HEK293T (cell line): ENCODE measurements at regions of chr6 and their contacts with region 1.

Region 1: GRCh38 chr6:133568970-133569889 is 319.7 kb upstream of the TCF21 start:
- DNase-seq: peak; percentile 69

Region 2: DNA sequence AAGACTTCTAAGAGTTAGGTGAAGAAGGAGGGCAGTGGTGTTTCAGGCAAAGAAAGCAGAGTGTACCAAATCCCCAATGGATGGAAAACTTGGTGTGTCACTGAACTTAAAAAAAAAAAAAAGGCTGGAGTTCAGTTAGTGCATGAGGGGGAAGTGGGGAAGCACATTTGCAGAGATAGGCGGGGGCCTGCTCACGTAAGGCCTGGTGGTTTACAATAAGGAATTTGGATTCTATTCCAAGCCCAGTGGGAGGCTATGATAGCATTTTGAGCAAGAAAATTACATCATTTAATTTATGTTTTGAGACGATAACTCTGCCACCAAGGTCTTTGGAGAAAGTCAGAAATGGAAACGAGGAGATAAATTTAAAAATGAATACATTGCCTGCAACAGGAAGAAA is 102.6 kb before region 1 on chr6:
- CTCF ChIA-PET with region 1: no interaction called
- POLR2A ChIA-PET with region 1: no interaction called
- DNase-seq: no peak

Region 3: DNA sequence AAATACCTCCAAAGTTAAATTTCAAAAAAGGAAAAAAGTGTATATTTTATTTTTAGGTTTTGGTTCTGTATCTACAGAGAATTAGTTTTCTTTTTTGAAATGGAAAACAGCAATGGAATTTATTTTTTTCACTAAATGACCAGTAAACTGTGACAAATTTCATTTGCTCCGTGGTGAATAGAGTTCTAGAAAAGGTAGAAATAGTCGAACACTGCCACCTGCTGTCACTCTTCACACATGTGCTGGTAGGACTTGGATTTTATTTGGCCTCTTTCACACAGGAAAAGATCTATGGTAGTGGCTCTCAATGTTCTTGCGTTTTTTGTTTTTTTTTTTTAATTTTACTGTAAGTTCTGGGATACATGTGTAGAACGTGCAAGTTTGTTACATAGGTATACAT is 15.6 kb before region 1 on chr6:
- CTCF ChIA-PET with region 1: no interaction called
- POLR2A ChIA-PET with region 1: no interaction called
- DNase-seq: peak; percentile 64

Region 4: GRCh38 chr6:133595111-133595761 is 26.0 kb after region 1 on chr6:
- CTCF ChIA-PET with region 1: no interaction called
- POLR2A ChIA-PET with region 1: no interaction called
- DNase-seq: no peak

Region 5: DNA sequence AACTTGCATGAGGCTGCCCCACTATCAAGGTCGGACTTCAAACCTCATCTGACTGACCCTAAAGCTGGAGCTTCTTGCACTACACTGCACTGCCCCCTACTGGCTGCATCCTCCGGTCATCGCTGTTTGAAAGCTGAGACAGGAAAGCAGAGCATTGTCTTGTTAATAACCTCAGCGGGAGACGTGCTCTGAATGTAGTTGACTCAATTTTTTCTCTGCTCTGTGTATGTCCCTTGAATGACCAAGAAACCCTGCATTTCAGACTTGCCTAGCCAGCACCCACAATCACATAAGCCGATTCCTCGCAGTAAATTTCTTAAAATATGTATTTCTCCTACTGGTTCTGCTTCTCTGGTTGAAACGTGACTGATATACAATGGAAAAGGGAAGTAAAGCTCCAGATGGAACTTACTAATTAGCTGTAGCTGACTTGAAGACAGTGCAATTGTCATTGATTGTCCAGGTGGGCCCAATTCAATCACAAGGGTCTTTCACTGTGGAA is 347.5 kb after region 1 on chr6:
- CTCF ChIA-PET with region 1: interaction called, 53 read pairs
- POLR2A ChIA-PET with region 1: interaction called, 3 read pairs
- DNase-seq: peak; percentile 81